ENCODE measurements at regions of chr3 and their contacts with region 1.

Region 1: DNA sequence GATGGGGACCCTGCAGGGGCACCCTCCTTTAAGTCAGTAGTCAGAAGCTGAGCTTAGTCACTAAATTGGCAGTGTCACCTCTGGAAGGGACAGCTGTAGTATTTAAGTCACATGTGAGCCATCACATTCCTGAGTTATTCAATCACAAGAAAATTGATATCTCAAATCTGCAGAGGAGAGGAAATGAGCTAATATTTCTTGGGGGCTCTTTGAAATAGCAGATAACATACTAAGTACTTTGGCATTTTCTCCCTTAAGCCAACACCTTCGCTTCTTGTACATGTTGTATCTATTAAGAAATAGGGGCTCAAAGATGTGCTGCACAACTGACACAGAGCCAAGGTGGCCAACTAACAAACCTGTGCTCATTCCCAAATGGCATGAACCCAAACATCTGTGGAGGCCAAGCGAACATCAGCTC is 63.1 kb downstream of the ABHD5 start:
- DNase-seq: no peak
- ATAC-seq: peak in 1 of 2 experiments; percentile 34; a peak in 1 of 6 replicates
- H3K4me3 ChIP-seq: no peak overlapping the region
- H3K27ac ChIP-seq: peak overlapping the region; percentile 35 to 38; a peak in 2 of 6 replicates
- H3K4me1 ChIP-seq: peaks cover 15% of the 10 kb centered on the region; the same call in 2 of the 3 replicates
- CTCF ChIP-seq: no peak
- EP300 ChIP-seq: no peak
- POLR2A ChIP-seq: no peak
- RAD21 ChIP-seq: no peak

Region 2: GRCh38 chr3:43723121-43723734 is 30.6 kb before region 1 on chr3:
- CTCF ChIA-PET with region 1: no interaction called
- POLR2A ChIA-PET with region 1: no interaction called
- DNase-seq: peak in 1 of 2 experiments; percentile 14
- ATAC-seq: no peak
- H3K4me3 ChIP-seq: no peak overlapping the region
- H3K27ac ChIP-seq: no peak overlapping the region
- H3K4me1 ChIP-seq: no peaks in the 10 kb centered on the region
- CTCF ChIP-seq: no peak
- EP300 ChIP-seq: no peak
- POLR2A ChIP-seq: no peak
- RAD21 ChIP-seq: no peak

Region 3: GRCh38 chr3:43769471-43770425 is 16.0 kb after region 1 on chr3:
- CTCF ChIA-PET with region 1: interaction called, 14 read pairs
- POLR2A ChIA-PET with region 1: no interaction called
- DNase-seq: peak; percentile 87 to 97
- ATAC-seq: peak; percentile 97 to 99
- H3K4me3 ChIP-seq: peak overlapping the region; percentile 30; the same call in 2 of the 3 replicates
- H3K27ac ChIP-seq: peak overlapping the region; percentile 64 to 82
- H3K4me1 ChIP-seq: peaks cover 46% of the 10 kb centered on the region
- CTCF ChIP-seq: peak; percentile 77
- EP300 ChIP-seq: no peak
- POLR2A ChIP-seq: no peak
- RAD21 ChIP-seq: peak; percentile 80 to 90

Measured in A549 (cell line).